ENCODE measurements at regions of chr16 and their contacts with region 1.

Region 1: DNA sequence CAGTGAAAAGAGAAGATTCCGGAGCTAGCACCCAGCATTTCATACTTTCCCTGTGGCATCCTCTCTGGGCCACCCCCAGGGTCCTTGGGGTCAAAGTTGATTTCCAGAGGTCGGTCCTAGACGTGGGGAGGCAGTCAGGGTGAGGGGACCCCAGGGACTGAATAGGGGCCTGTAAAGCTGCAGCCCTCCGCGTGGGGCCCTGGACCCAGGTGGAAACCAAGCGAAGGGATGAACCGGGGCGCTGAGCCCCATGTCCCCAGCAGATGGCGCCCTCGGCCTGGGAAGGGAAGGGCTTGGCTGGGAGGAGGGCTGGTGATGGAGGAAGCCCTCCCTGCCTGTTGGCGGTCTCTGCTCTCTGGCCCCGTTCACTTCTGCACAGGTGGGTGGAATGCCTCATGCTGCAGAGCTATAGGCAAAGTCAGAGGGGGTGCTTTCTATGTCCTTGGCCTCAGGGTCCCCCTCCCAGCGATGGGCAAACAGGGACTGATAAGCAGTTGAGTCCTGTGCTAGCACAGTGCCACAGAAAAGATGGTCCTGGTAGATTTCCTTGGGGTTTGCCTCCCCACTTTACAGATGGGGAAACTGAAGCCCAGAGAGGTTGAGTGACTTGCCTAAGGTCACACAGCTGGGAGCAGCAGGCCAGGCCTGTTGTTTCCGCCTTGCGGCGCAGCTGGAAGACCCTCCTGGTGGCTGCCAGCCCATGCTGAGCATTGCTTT is 163.4 kb upstream of the CIBAR2 start:
- DNase-seq: peak; percentile 32
- H3K4me3 ChIP-seq: no peak overlapping the region
- H3K27ac ChIP-seq: no peak overlapping the region
- H3K4me1 ChIP-seq: no peaks in the 10 kb centered on the region
- H3K27me3 ChIP-seq: no peaks in the 10 kb centered on the region
- CTCF ChIP-seq: peak; percentile 88 to 94

Region 2: GRCh38 chr16:85114909-85115567 is 160.7 kb before region 1 on chr16:
- CTCF ChIA-PET with region 1: interaction called, 5 read pairs
- dilution Hi-C with region 1: no loop called
- in situ Hi-C with region 1: no loop called
- intact Hi-C with region 1: loop called (anchors 2 kb)
- DNase-seq: peak; percentile 61
- H3K4me3 ChIP-seq: no peak overlapping the region
- H3K27ac ChIP-seq: no peak overlapping the region
- H3K4me1 ChIP-seq: no peaks in the 10 kb centered on the region
- H3K27me3 ChIP-seq: no peaks in the 10 kb centered on the region
- CTCF ChIP-seq: peak; percentile 96 to 100

Region 3: DNA sequence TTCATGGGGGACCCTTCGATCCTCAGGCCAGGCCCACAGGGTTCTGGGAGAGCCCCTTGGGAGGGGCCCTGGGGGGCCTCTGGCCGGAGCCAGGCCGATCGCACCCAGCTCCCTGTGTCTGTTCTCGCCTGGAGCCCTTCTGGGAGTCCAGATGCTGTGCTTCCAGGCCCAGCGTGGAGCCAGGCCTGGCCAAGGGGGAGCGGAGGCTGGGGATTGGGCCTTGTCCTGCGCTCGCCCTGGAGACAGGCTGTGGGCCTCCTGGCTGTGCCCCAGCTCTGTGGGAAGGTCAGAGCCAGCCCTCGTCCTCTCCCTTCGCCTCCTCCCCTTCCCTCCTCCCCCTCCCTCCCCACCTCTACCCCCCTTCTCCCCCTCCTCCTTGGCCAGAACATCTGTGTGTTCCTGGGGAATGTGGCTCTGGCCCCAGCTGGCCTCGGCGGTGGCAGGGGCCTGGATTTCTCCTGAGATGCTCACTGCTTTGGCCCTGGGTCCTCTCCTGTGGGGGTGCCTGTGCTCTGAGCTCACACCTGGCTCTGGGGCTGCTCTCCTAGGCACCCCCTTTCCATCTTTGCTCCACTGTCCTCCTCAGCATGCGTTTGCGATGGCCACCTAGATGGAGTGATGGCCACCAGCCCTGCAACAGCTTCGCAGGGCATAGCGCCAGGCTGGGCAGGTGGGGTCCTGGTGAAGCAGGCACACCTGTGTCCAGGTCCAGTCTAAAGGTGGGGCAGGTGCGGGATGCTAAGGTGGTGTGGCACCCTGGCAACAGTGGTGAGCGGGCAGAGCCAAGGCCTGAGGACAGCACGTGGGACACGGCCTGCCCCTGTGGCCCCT is 72.8 kb before region 1 on chr16:
- CTCF ChIA-PET with region 1: no interaction called
- dilution Hi-C with region 1: no loop called
- in situ Hi-C with region 1: no loop called
- intact Hi-C with region 1: no loop called
- DNase-seq: no peak
- H3K4me3 ChIP-seq: no peak overlapping the region
- H3K27ac ChIP-seq: no peak overlapping the region
- H3K4me1 ChIP-seq: peaks cover 6% of the 10 kb centered on the region
- H3K27me3 ChIP-seq: no peaks in the 10 kb centered on the region
- CTCF ChIP-seq: no peak

Region 4: DNA sequence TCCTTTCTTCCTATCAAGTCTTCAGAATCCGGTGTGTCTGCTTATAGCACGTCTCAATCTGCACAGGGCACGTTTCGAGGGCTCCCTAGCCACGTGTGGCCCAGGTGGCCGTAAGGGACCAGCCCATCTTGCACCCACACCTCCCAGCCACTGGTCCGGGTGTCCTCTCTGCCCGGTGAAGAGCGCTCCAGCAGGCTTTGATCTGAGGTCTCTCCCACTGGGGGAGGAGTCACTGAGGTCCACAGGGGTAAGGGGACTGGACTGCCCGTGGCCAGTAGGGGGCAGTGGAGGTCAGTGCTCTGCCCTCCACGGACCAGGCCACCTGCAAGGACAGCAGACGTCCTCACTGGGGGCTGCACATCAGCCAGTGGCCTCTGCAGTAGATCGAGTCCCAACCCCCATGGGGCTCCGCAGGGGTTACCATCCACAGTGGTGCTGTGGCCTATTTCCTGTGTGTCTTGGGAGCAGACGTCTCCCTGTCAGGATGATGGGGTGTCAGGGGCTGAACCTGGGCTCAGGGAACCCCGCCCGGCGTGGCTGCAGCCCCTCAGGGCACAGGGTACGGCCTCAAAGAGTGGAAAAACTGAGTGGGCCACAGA is 40.7 kb after region 1 on chr16:
- CTCF ChIA-PET with region 1: no interaction called
- dilution Hi-C with region 1: loop called (anchors 5 kb)
- in situ Hi-C with region 1: no loop called
- intact Hi-C with region 1: no loop called
- DNase-seq: peak; percentile 32
- H3K4me3 ChIP-seq: no peak overlapping the region
- H3K27ac ChIP-seq: no peak overlapping the region
- H3K4me1 ChIP-seq: peaks cover 16% of the 10 kb centered on the region
- H3K27me3 ChIP-seq: no peaks in the 10 kb centered on the region
- CTCF ChIP-seq: peak; percentile 70 to 93

Region 5: DNA sequence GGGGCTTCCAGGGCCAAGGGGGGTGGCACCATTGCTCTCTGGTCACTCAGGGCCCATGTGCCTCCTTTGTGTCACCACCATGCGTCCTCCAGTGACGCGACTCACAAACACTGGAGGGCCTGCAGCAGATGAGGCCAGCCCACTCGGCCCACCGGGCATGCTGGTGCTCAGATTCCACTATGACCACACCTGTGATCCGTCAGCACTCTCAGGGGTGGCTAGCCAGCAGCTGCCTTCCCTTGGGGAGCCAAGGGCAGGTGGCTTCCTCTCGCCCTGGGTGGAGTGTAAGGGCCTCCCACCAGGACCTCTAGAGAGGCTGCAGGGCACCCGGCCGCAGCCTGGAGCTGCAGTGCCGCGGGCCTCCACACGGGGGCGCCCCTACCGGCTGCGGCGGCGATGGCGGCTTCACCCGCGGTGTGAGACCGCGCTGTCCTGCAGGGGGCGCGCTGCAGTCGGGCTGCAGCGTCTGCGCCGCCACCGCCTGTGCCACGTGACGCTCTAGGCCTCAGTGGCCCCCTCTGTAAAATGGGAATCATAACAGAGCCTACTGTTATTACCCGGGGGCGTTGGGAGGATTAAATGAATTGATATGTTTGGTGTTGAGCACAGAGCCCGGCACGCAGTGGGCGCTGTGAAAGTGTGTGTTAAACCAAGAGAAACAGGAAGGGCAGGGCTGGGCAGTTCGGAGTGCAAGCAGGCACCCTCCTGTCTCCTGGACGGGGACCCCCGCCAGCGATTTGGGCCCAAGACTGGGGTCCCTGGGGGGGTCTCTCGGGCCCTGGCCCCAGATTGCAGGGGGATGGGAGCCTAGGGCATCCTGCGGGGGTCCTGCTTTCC is 145.0 kb after region 1 on chr16:
- CTCF ChIA-PET with region 1: no interaction called
- dilution Hi-C with region 1: no loop called
- in situ Hi-C with region 1: no loop called
- intact Hi-C with region 1: loop called (anchors 10 kb)
- DNase-seq: peak; percentile 20
- H3K4me3 ChIP-seq: no peak overlapping the region
- H3K27ac ChIP-seq: no peak overlapping the region
- H3K4me1 ChIP-seq: no peaks in the 10 kb centered on the region
- H3K27me3 ChIP-seq: no peaks in the 10 kb centered on the region
- CTCF ChIP-seq: peak; percentile 82 to 90

Region 6: GRCh38 chr16:86016201-86016871 is 740.6 kb after region 1 on chr16:
- CTCF ChIA-PET with region 1: no interaction called
- dilution Hi-C with region 1: no loop called
- in situ Hi-C with region 1: no loop called
- intact Hi-C with region 1: loop called (anchors 5 kb)
- DNase-seq: peak; percentile 34
- H3K4me3 ChIP-seq: no peak overlapping the region
- H3K27ac ChIP-seq: no peak overlapping the region
- H3K4me1 ChIP-seq: no peaks in the 10 kb centered on the region
- H3K27me3 ChIP-seq: no peaks in the 10 kb centered on the region
- CTCF ChIP-seq: peak; percentile 56 to 83